Aorta (tissue), 5 donors: ENCODE measurements at regions of chr2 and their contacts with region 1.

Region 1: DNA sequence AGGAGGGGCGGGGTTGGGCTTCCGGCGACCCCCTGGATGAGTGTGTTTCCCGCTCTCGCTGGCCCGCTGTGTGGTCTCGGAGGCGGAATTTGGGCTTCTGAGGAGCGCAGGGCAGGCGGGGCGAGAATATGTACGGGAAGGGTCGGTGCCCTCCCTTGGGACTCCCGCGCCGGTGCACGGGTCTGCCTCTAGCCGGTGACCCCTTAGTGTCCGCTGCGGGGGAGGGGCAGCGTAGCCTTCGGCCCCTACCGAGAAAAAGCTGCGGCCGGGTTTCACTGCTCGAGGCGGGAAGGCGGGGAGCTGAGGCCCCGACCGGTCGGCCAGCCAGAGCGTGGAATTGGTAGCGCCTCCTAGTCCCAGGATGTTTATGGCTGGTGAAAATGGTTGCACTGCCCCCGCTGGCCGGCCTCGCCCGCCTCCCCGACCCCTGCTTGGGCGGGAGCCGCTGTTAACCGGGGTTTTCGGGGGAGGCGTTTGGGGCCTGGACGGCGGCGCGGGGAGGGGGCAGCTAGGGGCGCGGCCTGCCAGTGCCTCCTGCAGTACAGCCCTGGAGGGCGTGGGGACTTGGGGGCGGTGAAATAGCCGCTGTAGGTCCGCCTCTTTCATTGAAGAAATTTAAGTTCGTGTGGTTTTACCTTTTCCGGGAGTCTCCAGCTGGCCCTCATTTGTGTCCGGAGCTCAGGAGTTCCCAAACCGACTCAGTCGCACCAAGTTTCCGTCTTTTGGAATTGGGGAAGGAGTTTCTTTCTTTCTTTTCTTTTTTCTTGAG is at the start of gene UGP2:
- DNase-seq: peak; percentile 97
- ATAC-seq: peak; percentile 95
- H3K4me3 ChIP-seq: peak within 1 kb of the TSS; percentile 68 to 71
- H3K27ac ChIP-seq: peak within 1 kb of the TSS; percentile 84 to 93
- H3K4me1 ChIP-seq: peaks cover 6 to 7% of the 10 kb centered on the region in 2 donors
- H3K27me3 ChIP-seq: no peaks in the 10 kb centered on the region
- total RNA-seq, gene UGP2: 171 to 188 TPM

Region 2: DNA sequence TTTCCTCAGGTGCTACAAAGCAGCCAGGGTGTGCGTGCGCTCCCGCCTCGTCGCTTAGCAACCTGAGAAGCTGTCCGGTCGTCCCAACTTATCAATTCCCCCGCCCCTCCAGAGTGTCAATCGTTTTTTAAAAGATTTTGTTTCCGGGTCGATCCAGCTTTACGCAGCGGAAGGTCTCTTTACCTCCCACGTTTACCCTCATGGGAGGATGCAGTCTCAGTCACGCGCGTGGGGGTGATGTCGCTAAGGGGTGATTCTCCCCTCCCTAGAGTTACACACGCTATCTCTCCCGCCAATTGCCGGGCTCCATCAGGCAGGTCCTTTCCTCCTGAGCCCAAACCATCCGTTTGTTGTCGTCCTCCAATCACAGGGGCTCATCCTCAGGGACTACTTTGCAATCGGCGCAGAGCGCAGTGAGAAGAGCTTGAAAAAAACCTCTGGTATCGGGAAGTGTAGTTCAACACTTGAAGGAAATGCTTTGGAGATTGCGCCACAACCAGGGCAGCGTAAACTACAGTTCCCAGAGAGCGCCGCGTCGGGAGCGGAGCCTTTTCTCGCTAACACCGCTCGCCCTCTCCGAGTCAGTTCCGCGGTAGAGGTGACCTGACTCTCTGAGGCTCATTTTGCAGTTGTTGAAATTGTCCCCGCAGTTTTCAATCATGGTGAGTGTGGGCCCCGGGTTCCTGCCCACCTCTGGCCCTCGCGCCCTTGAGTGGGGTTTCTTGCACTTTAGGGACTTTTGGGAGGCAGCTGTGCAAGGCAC is 252.9 kb before region 1 on chr2 and contains the starts of genes MDH1 and WDPCP:
- intact Hi-C with region 1: loop called in 1 of 2 experiments (anchors 10 kb)
- DNase-seq: peak; percentile 96 to 97
- ATAC-seq: peak; percentile 99
- H3K4me3 ChIP-seq: peak within 1 kb of the TSS; percentile 86 to 94
- H3K27ac ChIP-seq: peak within 1 kb of the TSS; percentile 52 to 93
- H3K4me1 ChIP-seq: peaks cover 2 to 8% of the 10 kb centered on the region in 2 donors
- H3K27me3 ChIP-seq: no peaks in the 10 kb centered on the region
- total RNA-seq, gene MDH1: 84.9 to 94.8 TPM
- total RNA-seq, gene WDPCP: 20.5 to 20.8 TPM

Region 3: DNA sequence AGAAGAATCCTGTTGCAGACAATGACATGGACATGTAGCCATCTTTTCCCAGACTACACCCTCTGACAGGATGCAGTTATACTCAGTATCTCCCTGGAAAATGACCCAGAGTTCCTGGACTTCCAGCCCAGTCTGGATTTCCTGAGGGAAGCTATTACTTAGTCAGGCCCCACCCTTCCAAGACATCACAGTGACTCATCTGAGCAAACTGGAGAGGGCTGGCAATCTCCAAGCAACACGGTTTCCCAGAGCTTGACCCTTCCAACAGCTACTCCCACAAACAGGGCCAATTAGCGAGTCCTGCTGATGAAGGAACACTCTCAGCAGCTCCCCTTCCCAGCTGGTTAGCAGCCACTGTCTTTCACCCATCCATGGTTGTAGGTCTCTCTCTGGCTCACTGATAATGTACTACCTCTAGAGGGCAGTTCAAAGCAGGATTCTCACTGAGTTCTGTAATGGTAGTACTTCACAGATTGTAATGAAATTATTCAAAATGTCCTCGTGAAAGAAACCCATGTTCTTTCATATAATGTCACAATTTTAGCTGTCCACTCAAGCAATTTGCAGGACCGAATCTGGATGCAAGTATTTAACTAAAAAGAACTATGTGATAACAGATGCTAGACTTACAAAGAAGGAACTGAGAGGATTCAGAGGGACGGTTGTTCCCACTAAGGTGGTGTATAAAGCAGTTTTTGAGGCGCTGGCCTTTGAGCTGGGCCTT is 142.5 kb before region 1 on chr2:
- intact Hi-C with region 1: loop called in 1 of 2 experiments (anchors 5 kb)
- DNase-seq: peak in 1 of 2 donors; percentile 68
- ATAC-seq: peak; percentile 95
- H3K4me3 ChIP-seq: no peak overlapping the region
- H3K27ac ChIP-seq: peak overlapping the region; percentile 28 to 50
- H3K4me1 ChIP-seq: no peaks in the 10 kb centered on the region
- H3K27me3 ChIP-seq: no peaks in the 10 kb centered on the region

Region 4: DNA sequence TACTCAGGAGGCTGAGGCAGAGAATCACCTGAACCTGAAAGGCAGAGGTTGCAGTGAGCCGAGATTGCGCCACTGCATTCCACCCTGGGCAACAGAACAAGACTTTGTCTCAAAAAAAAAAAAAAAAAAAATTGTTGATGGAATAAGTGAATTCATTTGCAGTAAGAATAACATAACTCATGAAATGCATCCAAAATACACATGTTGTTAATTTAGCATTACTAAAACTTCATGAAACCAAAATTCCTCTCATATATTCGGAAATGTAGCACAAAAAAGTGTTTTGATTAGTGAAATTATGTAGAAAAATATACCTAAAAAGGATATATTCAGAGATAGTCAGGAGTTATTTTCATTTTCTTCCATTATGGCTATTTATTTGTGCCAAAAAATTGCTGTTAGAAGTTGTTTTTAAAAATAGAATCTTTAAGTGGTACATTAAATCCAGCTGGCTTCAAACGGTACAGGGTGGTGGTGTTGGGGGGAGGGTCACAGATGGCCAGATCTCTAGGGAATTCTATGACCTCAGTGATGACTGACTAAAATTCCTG is 78.0 kb before region 1 on chr2:
- intact Hi-C with region 1: loop called in 1 of 2 experiments (anchors 5 kb)
- DNase-seq: peak in 1 of 2 donors; percentile 48
- ATAC-seq: peak; percentile 71
- H3K4me3 ChIP-seq: no peak overlapping the region
- H3K27ac ChIP-seq: no peak overlapping the region
- H3K4me1 ChIP-seq: peaks cover 0 to 2% of the 10 kb centered on the region in 2 donors
- H3K27me3 ChIP-seq: no peaks in the 10 kb centered on the region

Region 5: GRCh38 chr2:63790913-63791312 is 50.5 kb before region 1 on chr2:
- intact Hi-C with region 1: loop called (anchors 5 to 10 kb)
- DNase-seq: no peak
- ATAC-seq: peak; percentile 49
- H3K4me3 ChIP-seq: no peak overlapping the region
- H3K27ac ChIP-seq: no peak overlapping the region
- H3K4me1 ChIP-seq: peaks cover 0 to 6% of the 10 kb centered on the region in 2 donors
- H3K27me3 ChIP-seq: no peaks in the 10 kb centered on the region

Region 6: GRCh38 chr2:63796366-63796765 is 45.1 kb before region 1 on chr2:
- intact Hi-C with region 1: loop called (anchors 5 to 10 kb)
- DNase-seq: no peak
- ATAC-seq: no peak
- H3K4me3 ChIP-seq: no peak overlapping the region
- H3K27ac ChIP-seq: peak overlapping the region in 1 of 2 donors; percentile 14
- H3K4me1 ChIP-seq: peaks cover 1 to 2% of the 10 kb centered on the region in 2 donors
- H3K27me3 ChIP-seq: no peaks in the 10 kb centered on the region